ENCODE measurements at regions of chrX and their contacts with region 1.

Region 1: DNA sequence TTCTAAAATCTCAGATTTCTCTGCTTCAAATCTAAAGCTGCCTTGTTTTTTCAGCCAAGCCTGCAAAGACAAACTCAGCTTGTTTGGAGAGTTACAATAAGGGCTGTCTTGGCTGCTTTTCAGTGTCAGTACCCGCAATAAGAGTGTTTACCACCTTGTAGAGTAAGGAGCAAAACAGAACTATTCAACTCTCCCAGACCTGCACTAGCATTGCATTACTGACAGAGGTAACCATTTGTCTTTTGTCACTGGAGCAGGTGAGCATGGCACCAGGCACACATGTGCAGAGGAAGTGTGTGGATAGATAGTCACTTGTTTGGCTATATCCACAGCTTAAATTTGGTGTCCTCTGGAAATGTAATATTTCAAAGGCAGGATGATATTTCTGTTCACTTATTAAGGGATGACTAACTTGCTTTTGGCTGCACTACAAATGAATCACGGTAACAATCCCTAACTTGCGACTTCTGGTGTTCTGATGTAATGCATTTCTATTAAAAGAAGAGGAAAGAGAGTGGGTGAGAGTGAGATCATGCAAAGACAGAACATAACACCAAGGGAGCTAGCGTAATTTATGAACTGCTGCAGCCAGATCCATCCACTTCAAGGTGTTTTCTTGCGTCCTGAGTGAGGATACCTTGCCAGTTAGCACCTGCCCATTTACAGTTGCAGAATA is 38.6 kb downstream of the PTCHD1 start:
- DNase-seq: no peak
- H3K4me3 ChIP-seq: no peak overlapping the region
- H3K27ac ChIP-seq: peak overlapping the region; percentile 57 to 63
- H3K4me1 ChIP-seq: peaks cover 0 to 48% (median 8%) of the 10 kb centered on the region in 4 donors
- H3K27me3 ChIP-seq: no peaks in the 10 kb centered on the region
- CTCF ChIP-seq: no peak

Region 2: GRCh38 chrX:21940356-21940829 is 1432.9 kb before region 1 on chrX and contains the start of gene SMS:
- intact Hi-C with region 1: loop called (anchors 10 kb)
- DNase-seq: peak; percentile 75 to 90
- H3K4me3 ChIP-seq: peak within 1 kb of the TSS; percentile 67 to 68
- H3K27ac ChIP-seq: peak within 1 kb of the TSS; percentile 76 to 81
- H3K4me1 ChIP-seq: peaks cover 0 to 15% (median 0%) of the 10 kb centered on the region in 4 donors
- H3K27me3 ChIP-seq: no peaks in the 10 kb centered on the region
- CTCF ChIP-seq: no peak

Region 3: DNA sequence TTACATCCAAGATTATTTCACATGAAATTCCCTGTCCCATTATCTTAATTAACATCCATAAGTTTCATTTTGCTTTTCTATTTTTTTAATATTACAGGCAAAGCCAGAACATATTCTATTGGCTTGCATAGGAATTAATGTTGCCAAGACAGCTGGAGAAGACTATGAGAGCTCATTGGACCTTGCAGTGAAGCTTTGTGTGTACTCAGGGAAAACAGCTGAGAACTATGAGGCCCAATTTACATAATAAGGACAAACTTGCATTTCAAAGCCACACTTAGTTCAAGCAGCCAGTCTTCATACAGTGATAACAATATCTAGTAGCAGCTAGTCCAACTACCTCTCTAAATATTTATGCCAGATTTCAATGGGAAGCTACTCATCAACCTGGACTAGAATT is 239.1 kb before region 1 on chrX:
- intact Hi-C with region 1: no loop called
- DNase-seq: no peak
- H3K4me3 ChIP-seq: no peak overlapping the region
- H3K27ac ChIP-seq: no peak overlapping the region
- H3K4me1 ChIP-seq: no peaks in the 10 kb centered on the region
- H3K27me3 ChIP-seq: no peaks in the 10 kb centered on the region
- CTCF ChIP-seq: no peak

Measured in tibial artery (tissue), 4 donors.